Mammary epithelial cell (primary cell): ENCODE measurements at regions of chr10 and their contacts with region 1.

Region 1: DNA sequence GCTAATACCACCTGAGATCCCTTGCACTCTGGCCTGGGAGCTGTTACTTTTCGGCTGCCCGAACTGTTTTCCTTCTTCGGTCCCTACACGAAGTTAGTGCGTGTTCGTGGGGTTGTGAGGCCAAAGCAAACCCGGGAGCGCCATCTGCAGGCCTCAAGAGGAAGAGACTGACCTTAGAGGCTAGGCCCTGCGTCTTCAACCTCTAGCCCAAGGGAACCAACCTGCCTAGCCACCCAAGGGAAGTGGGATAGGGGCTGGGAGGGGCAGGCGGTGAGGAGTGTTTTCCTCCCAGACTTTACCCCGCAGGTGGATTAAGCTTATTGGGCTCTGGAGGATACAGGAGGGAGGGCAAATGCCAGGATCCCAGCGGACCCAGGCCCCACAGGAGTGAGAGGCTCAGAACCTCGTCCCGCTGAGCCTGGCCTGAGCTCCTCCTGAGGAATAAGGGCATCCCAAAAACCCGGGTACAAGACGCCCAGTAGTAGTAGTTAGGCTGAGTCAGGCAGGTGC is 1.7 kb upstream of the PAX2 start:
- DNase-seq: peak; percentile 41
- H3K4me3 ChIP-seq: no peak overlapping the region
- H3K27ac ChIP-seq: no peak overlapping the region
- H3K4me1 ChIP-seq: no peaks in the 10 kb centered on the region
- H3K27me3 ChIP-seq: peaks cover 91% of the 10 kb centered on the region
- CTCF ChIP-seq: peak; percentile 63 to 87

Region 2: GRCh38 chr10:100319707-100320106 is 424.0 kb before region 1 on chr10:
- CTCF ChIA-PET with region 1: no interaction called
- dilution Hi-C with region 1: no loop called
- in situ Hi-C with region 1: no loop called
- intact Hi-C with region 1: no loop called
- DNase-seq: no peak
- H3K4me3 ChIP-seq: no peak overlapping the region
- H3K27ac ChIP-seq: no peak overlapping the region
- H3K4me1 ChIP-seq: no peaks in the 10 kb centered on the region
- H3K27me3 ChIP-seq: peaks cover 1% of the 10 kb centered on the region
- CTCF ChIP-seq: no peak

Region 3: DNA sequence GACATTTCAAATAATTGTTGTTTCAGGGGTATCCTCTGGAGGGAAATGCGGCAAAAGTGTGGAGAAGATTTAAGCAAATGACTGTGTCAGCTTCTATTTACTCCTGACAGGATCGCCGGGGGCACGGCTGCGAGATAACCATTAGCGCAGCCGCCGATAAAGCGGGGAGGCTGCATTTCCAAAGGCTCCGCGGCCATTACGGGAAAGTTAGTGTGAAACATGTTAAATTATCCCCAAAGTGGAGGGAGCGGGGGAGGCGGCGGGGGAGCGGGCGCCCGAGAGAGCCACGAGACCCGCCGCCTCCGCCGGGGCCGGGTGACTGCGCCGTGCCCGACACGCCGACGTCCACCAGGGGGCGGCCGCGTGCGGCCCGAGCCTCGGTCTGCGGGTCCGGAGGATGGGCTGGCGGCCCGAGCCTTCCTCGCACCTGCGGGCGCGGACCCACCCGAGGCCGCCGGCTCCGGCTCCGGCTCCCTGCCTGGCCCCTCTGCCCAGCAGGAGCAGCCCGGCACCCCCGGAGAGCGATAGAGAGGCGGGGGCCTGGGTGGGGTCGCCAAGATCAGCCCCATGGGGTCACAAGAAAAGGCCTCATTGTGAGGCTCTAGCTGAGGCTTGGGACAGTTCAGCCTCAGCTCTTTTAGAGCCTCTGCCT is 72.7 kb before region 1 on chr10:
- CTCF ChIA-PET with region 1: no interaction called
- dilution Hi-C with region 1: no loop called
- in situ Hi-C with region 1: no loop called
- intact Hi-C with region 1: loop called (anchors 2 kb)
- DNase-seq: no peak
- H3K4me3 ChIP-seq: no peak overlapping the region
- H3K27ac ChIP-seq: no peak overlapping the region
- H3K4me1 ChIP-seq: no peaks in the 10 kb centered on the region
- H3K27me3 ChIP-seq: peaks cover 18% of the 10 kb centered on the region
- CTCF ChIP-seq: peak in 1 of 2 donors; percentile 47

Region 4: DNA sequence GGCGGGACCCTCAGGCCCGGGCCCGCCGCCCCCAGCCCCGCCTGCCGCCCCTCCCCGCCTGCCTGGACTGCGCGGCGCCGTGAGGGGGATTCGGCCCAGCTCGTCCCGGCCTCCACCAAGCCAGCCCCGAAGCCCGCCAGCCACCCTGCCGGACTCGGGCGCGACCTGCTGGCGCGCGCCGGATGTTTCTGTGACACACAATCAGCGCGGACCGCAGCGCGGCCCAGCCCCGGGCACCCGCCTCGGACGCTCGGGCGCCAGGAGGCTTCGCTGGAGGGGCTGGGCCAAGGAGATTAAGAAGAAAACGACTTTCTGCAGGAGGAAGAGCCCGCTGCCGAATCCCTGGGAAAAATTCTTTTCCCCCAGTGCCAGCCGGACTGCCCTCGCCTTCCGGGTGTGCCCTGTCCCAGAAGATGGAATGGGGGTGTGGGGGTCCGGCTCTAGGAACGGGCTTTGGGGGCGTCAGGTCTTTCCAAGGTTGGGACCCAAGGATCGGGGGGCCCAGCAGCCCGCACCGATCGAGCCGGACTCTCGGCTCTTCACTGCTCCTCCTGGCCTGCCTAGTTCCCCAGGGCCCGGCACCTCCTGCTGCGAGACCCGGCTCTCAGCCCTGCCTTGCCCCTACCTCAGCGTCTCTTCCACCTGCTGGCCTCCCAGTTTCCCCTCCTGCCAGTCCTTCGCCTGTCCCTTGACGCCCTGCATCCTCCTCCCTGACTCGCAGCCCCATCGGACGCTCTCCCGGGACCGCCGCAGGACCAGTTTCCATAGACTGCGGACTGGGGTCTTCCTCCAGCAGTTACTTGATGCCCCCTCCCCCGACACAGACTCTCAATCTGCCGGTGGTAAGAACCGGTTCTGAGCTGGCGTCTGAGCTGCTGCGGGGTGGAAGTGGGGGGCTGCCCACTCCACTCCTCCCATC is 84.4 kb after region 1 on chr10:
- CTCF ChIA-PET with region 1: no interaction called
- dilution Hi-C with region 1: no loop called
- in situ Hi-C with region 1: no loop called
- intact Hi-C with region 1: loop called (anchors 5 kb)
- DNase-seq: peak; percentile 3
- H3K4me3 ChIP-seq: no peak overlapping the region
- H3K27ac ChIP-seq: no peak overlapping the region
- H3K4me1 ChIP-seq: peaks cover 21% of the 10 kb centered on the region
- H3K27me3 ChIP-seq: peaks cover 56% of the 10 kb centered on the region
- CTCF ChIP-seq: no peak